PC-9 (cell line): ENCODE measurements at regions of chr5 and their contacts with region 1.

Region 1: GRCh38 chr5:149128023-149128875 is 13.0 kb upstream of the ABLIM3 start:
- DNase-seq: peak in 1 of 2 experiments; percentile 64
- H3K4me3 ChIP-seq: peak overlapping the region; percentile 32; the same call in 1 of the 2 replicates
- H3K27ac ChIP-seq: peak overlapping the region; percentile 94
- H3K4me1 ChIP-seq: peaks cover 86% of the 10 kb centered on the region
- H3K27me3 ChIP-seq: no peaks in the 10 kb centered on the region
- CTCF ChIP-seq: peak; percentile 83

Region 2: DNA sequence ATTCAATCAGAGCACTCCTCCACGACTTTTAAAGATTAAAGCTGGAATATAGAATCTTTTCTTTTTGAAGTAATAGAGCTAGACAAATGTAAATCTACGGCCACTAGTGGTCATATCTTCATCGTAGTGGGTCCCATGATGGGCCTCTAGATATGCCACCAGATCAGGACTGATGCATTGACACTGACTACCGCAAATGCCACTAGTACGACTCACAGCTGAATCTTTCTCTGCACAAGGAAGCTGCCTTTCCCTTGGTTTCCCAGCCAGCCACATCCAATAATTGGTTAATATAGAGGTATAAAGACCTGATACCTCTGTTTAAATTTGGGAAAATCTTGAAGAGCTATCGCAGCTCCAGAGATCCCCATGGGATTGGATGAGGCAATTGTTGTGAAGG is 339.6 kb before region 1 on chr5:
- CTCF ChIA-PET with region 1: no interaction called
- POLR2A ChIA-PET with region 1: no interaction called
- intact Hi-C with region 1: no loop called
- DNase-seq: peak in 1 of 2 experiments; percentile 33
- H3K4me3 ChIP-seq: no peak overlapping the region
- H3K27ac ChIP-seq: no peak overlapping the region
- H3K4me1 ChIP-seq: no peaks in the 10 kb centered on the region
- H3K27me3 ChIP-seq: no peaks in the 10 kb centered on the region
- CTCF ChIP-seq: no peak

Region 3: DNA sequence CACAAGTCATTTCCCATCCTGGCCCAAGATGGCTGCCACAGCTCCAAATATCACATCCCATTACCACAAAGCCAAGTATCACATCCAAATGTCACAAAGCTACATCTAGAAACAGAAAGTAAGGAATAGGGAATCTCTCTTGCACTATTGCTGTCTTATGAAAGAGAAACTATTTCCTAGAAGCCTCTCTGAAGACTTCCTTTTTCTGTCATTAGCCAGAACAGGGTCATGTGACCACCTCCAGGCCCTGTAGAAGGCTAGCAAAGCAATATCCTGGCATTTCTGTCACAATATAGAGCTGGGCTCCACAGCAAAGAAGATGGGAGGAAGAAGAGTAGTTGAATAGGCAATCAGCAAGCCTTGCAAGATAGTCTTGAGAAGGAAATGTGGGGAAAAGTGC is 164.6 kb before region 1 on chr5:
- CTCF ChIA-PET with region 1: no interaction called
- POLR2A ChIA-PET with region 1: interaction called, 4 read pairs
- intact Hi-C with region 1: loop called (anchors 5 kb)
- DNase-seq: peak in 1 of 2 experiments; percentile 31
- H3K4me3 ChIP-seq: no peak overlapping the region
- H3K27ac ChIP-seq: peak overlapping the region; percentile 34
- H3K4me1 ChIP-seq: peaks cover 57% of the 10 kb centered on the region
- H3K27me3 ChIP-seq: no peaks in the 10 kb centered on the region
- CTCF ChIP-seq: no peak

Region 4: GRCh38 chr5:149035372-149035790 is 92.9 kb before region 1 on chr5:
- CTCF ChIA-PET with region 1: no interaction called
- POLR2A ChIA-PET with region 1: no interaction called
- intact Hi-C with region 1: loop called (anchors 1 kb)
- DNase-seq: peak; percentile 66 to 79
- H3K4me3 ChIP-seq: no peak overlapping the region
- H3K27ac ChIP-seq: peak overlapping the region; percentile 1; the same call in 1 of the 2 replicates
- H3K4me1 ChIP-seq: peaks cover 58% of the 10 kb centered on the region
- H3K27me3 ChIP-seq: no peaks in the 10 kb centered on the region
- CTCF ChIP-seq: peak; percentile 90

Region 5: GRCh38 chr5:149114403-149115312 is 13.6 kb before region 1 on chr5:
- CTCF ChIA-PET with region 1: interaction called, 13 read pairs
- POLR2A ChIA-PET with region 1: interaction called, 26 read pairs
- intact Hi-C with region 1: loop called (anchors 1 kb)
- DNase-seq: peak; percentile 74 to 82
- H3K4me3 ChIP-seq: peak overlapping the region; percentile 22; the same call in 1 of the 2 replicates
- H3K27ac ChIP-seq: peak overlapping the region; percentile 92
- H3K4me1 ChIP-seq: peaks cover 66% of the 10 kb centered on the region
- H3K27me3 ChIP-seq: no peaks in the 10 kb centered on the region
- CTCF ChIP-seq: peak; percentile 90

Region 6: GRCh38 chr5:149195337-149195887 is 67.2 kb after region 1 on chr5:
- CTCF ChIA-PET with region 1: interaction called, 5 read pairs
- POLR2A ChIA-PET with region 1: no interaction called
- intact Hi-C with region 1: loop called (anchors 1 kb)
- DNase-seq: no peak
- H3K4me3 ChIP-seq: no peak overlapping the region
- H3K27ac ChIP-seq: no peak overlapping the region
- H3K4me1 ChIP-seq: 0 out of 2 replicates have a peak, but pooled peaks cover 4% of the 10 kb centered on the region
- H3K27me3 ChIP-seq: no peaks in the 10 kb centered on the region
- CTCF ChIP-seq: no peak

Region 7: GRCh38 chr5:149268928-149269557 is 140.8 kb after region 1 on chr5:
- CTCF ChIA-PET with region 1: interaction called, 13 read pairs
- POLR2A ChIA-PET with region 1: interaction called, 6 read pairs
- intact Hi-C with region 1: loop called (anchors 1 kb)
- DNase-seq: peak in 1 of 2 experiments; percentile 72
- H3K4me3 ChIP-seq: no peak overlapping the region
- H3K27ac ChIP-seq: no peak overlapping the region
- H3K4me1 ChIP-seq: peaks cover 13% of the 10 kb centered on the region
- H3K27me3 ChIP-seq: no peaks in the 10 kb centered on the region
- CTCF ChIP-seq: peak; percentile 91

Region 8: GRCh38 chr5:149288436-149288835 is 160.2 kb after region 1 on chr5:
- CTCF ChIA-PET with region 1: no interaction called
- POLR2A ChIA-PET with region 1: no interaction called
- intact Hi-C with region 1: no loop called
- DNase-seq: no peak
- H3K4me3 ChIP-seq: no peak overlapping the region
- H3K27ac ChIP-seq: no peak overlapping the region
- H3K4me1 ChIP-seq: no peaks in the 10 kb centered on the region
- H3K27me3 ChIP-seq: no peaks in the 10 kb centered on the region
- CTCF ChIP-seq: no peak